ENCODE measurements at regions of chr4 and their contacts with region 1.

Region 1: GRCh38 chr4:154779362-154779947 is 1.6 kb upstream of the RBM46 start:
- DNase-seq: no peak
- H3K4me3 ChIP-seq: no peak overlapping the region
- H3K27ac ChIP-seq: no peak overlapping the region
- H3K4me1 ChIP-seq: no peaks in the 10 kb centered on the region
- H3K27me3 ChIP-seq: no peaks in the 10 kb centered on the region
- CTCF ChIP-seq: peak; percentile 37 to 55 (median 47)
- EP300 ChIP-seq: no peak
- POLR2A ChIP-seq: no peak

Region 2: GRCh38 chr4:154626793-154627484 is 152.5 kb before region 1 on chr4:
- in situ Hi-C with region 1: loop called in 1 of 4 experiments (anchors 25 kb)
- intact Hi-C with region 1: no loop called
- DNase-seq: peak; percentile 38
- H3K4me3 ChIP-seq: peak overlapping the region in 2 of 4 donors; percentile 24 to 36
- H3K27ac ChIP-seq: no peak overlapping the region
- H3K4me1 ChIP-seq: peaks cover 0 to 10% (median 9%) of the 10 kb centered on the region in 4 donors
- H3K27me3 ChIP-seq: peaks cover 32% of the 10 kb centered on the region
- CTCF ChIP-seq: peak; percentile 25 to 55 (median 40)
- EP300 ChIP-seq: no peak
- POLR2A ChIP-seq: no peak

Measured in transverse colon (tissue), 4 donors.